ENCODE measurements at regions of chr17 and their contacts with region 1.

Region 1: GRCh38 chr17:33038740-33039139 is 47.1 kb downstream of the SPACA3 start:
- DNase-seq: peak; percentile 31 to 89
- H3K4me3 ChIP-seq: no peak overlapping the region
- H3K27ac ChIP-seq: no peak overlapping the region
- H3K4me1 ChIP-seq: no peaks in the 10 kb centered on the region
- H3K27me3 ChIP-seq: no peaks in the 10 kb centered on the region; a peak in 2 of 7 replicates
- CTCF ChIP-seq: peak; percentile 81 to 96 (median 86)
- EP300 ChIP-seq: no peak
- POLR2A ChIP-seq: no peak
- RAD21 ChIP-seq: peak; percentile 75 to 83

Region 2: DNA sequence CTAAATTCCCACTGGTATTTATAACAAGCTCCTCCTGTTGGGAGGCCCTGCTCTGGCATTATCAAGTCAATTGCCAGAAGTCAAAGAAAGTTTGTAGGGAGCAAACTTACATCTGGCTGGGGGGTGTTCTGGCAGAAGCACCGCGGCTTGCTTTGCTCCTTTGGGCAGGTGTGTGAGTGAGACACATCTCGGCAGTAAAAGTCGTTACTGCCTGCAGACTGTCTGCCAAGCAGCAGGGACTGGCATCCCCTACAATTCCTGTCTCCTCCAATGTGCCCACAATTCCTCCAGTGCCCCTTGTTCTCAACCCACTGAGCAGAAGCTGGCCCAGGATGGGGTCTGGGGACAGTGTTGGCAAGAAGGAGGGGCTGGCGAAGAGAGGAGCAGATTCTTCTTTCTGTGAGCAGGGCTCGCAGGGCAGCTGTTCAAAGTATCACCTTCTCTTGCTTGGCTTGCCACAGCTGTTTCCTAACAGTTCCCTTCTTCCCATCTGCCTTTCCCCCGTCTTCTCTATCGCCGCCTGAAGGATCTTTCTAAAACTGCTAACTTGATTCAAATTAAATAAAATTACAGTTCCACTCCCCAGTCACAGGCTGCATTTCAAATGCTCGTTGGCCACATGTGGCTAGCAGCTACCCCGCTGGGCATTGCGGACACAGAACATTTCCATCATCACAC is 16.9 kb before region 1 on chr17:
- CTCF ChIA-PET with region 1: interaction called, 43 read pairs
- POLR2A ChIA-PET with region 1: no interaction called
- DNase-seq: peak in 1 of 2 experiments; percentile 48
- H3K4me3 ChIP-seq: no peak overlapping the region
- H3K27ac ChIP-seq: no peak overlapping the region
- H3K4me1 ChIP-seq: peaks cover 0 to 12% (median 5%) of the 10 kb centered on the region in 4 experiments; a peak in 5 of 7 replicates
- H3K27me3 ChIP-seq: no peaks in the 10 kb centered on the region; a peak in 2 of 7 replicates
- CTCF ChIP-seq: peak in 1 of 3 experiments; percentile 52; a peak in 2 of 4 replicates
- EP300 ChIP-seq: no peak
- POLR2A ChIP-seq: no peak
- RAD21 ChIP-seq: peak; percentile 31 to 43

Region 3: DNA sequence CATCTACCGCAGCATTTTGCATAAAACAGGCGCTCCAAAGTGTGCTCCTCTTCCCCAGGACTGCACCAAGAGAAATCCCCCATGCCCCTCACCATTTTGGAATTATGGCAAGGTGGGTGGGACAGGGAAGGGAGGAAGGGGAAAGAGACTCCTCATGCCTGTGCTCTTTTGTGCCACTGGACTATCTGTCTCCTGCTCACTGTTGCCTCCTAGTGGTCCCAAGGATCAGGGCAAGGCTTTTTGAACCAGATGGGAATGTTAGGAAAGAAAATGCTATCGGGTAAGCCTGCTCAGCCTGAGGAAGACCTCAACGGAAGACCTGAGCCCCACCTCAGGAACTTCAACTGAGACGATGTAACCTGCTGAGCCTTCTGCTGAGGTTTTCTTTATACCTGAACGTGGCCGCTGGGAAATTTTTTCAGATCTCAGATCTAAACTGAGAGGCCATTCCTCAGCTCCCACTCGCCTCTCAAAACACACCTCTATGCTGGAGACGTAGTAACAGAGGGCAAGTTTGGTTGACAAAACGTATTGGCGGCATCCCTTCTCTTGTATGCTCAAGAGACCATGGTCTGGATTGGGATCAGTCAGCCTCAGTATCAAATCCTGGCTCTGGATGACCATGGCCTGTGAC is 11.2 kb after region 1 on chr17:
- CTCF ChIA-PET with region 1: interaction called, 29 read pairs
- POLR2A ChIA-PET with region 1: no interaction called
- DNase-seq: peak; percentile 5 to 81
- H3K4me3 ChIP-seq: no peak overlapping the region
- H3K27ac ChIP-seq: no peak overlapping the region
- H3K4me1 ChIP-seq: no peaks in the 10 kb centered on the region
- H3K27me3 ChIP-seq: peaks cover 0 to 3% (median 0%) of the 10 kb centered on the region in 4 experiments; a peak in 1 of 7 replicates
- CTCF ChIP-seq: peak; percentile 75 to 94 (median 78)
- EP300 ChIP-seq: no peak
- POLR2A ChIP-seq: no peak
- RAD21 ChIP-seq: peak; percentile 58 to 70

Region 4: GRCh38 chr17:33079201-33079600 is 40.5 kb after region 1 on chr17:
- CTCF ChIA-PET with region 1: no interaction called
- POLR2A ChIA-PET with region 1: no interaction called
- DNase-seq: no peak
- H3K4me3 ChIP-seq: no peak overlapping the region
- H3K27ac ChIP-seq: no peak overlapping the region
- H3K4me1 ChIP-seq: no peaks in the 10 kb centered on the region
- H3K27me3 ChIP-seq: no peaks in the 10 kb centered on the region; a peak in 1 of 7 replicates
- CTCF ChIP-seq: no peak
- EP300 ChIP-seq: no peak
- POLR2A ChIP-seq: no peak
- RAD21 ChIP-seq: no peak

Measured in H1 (cell line).